Astrocyte of the cerebellum (primary cell): ENCODE measurements at regions of chr11 and their contacts with region 1.

Region 1: GRCh38 chr11:106477776-106478175 is 400.3 kb downstream of the AASDHPPT start:
- DNase-seq: no peak
- H3K4me3 ChIP-seq: no peak overlapping the region
- CTCF ChIP-seq: no peak

Region 2: DNA sequence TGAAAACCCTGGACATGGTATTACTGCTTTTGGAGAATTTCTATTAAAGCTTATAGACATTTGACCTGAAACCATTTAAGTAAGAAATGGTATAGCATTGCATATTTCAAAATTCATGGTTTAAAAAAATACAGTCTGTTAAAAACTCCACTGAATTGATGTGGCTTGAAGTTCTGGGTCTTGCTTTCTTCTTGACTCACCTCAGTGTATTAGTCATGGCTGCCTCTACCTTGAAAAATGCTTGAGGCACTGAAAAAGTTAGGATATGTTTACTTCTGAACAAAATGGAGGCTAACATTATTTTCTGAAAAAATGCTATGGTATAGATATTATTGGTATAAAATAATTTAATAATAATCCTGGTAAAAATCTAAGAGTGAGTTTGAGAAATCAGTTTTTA is 51.1 kb before region 1 on chr11:
- in situ Hi-C with region 1: loop called (anchors 5 kb)
- DNase-seq: no peak
- H3K4me3 ChIP-seq: no peak overlapping the region
- CTCF ChIP-seq: no peak

Region 3: DNA sequence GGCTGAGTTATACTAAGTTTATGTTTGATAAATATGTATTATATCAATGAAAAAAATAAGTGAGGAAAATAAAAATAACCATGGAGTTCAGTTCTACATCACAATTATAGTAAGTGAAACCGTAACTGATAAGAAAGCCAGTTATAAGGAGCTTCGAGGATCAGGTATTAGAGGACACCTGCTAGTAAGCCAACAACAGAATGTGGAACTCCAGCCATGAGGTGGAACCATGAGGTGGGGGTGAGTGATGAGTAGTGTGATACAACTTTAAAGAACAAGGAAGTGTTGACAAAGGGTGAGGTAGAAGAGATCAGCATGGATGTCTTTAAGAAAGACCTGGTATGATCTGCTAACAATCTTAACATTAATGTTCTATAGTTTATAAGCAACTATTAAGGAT is 87.5 kb after region 1 on chr11:
- in situ Hi-C with region 1: no loop called
- DNase-seq: no peak
- H3K4me3 ChIP-seq: no peak overlapping the region
- CTCF ChIP-seq: no peak

Region 4: GRCh38 chr11:107337917-107338316 is 860.1 kb after region 1 on chr11:
- in situ Hi-C with region 1: no loop called
- DNase-seq: no peak
- H3K4me3 ChIP-seq: no peak overlapping the region
- CTCF ChIP-seq: no peak